Panc1 (cell line): ENCODE measurements at regions of chr5 and their contacts with region 1.

Region 1: DNA sequence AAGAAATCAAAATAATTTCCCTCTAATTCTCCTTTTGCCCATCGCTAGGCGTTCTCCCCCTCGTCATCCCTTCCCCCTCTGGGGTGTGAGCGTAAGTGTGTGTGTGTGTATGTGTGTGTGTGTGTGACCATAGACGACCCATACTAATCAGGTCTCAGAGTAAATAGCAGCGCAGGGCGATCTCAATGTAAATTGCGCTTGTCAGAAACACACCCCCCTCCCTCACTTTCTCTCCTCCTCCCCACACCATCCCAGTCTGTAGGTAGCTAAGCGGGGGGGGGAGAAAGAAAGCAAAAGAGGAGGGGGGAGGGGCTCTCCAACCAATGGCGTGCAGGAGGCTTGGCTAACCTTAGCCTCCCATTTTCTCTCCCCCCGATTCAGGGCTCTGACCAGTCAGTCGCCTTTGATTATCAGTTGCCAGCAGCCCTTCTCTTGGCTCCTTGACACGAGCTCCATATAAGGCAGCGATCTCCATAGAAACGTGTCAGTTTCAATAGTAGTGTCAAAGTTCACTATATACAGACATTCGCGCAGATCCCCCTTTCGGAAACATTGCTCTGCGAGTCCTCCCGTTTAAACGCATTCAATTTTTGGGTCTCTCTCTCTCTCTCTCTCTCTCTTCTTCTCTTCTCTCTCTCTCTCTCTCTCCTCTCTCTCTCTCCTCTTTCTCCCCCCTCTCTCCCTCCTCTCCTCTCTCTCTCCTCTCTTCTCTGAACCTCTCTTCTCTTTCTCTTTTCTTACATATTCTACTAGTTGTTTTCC is at the start of gene NR2F1:
- DNase-seq: no peak
- ATAC-seq: peak; percentile 56
- H3K4me3 ChIP-seq: peak within 1 kb of the TSS; percentile 68 to 71
- H3K27ac ChIP-seq: peak within 1 kb of the TSS; percentile 94
- H3K4me1 ChIP-seq: peaks cover 16% of the 10 kb centered on the region
- H3K27me3 ChIP-seq: no peaks in the 10 kb centered on the region
- CTCF ChIP-seq: no peak
- total RNA-seq, gene NR2F1: 49.5 TPM

Region 2: DNA sequence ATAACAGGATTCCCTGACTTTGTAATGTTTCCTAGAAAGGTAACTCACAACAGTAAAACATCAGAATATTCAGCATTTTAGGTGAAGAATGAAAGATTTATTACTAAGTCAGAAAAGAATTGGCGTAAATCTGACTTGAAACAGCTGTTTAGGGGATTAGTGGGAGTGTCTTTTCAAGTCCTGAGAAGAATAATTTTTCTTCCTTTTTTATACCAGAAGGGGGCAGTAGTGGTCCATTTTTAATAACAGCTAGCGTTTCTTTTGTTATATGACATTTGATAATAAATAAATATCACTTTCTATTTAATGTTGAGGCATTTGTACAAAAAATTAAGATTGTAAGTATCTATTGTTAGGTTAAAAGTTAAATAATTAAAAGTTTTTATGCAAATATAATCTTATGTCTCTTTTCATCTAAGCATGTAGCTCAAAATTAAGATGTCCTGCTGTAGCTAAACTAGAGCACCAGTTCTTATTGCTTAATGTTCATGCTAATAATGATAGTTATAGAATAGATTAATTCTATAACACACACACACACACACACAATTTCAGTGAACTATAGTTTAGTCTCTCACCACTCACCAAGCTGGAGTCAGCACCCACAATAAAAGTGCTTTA is 1941.0 kb before region 1 on chr5:
- CTCF ChIA-PET with region 1: no interaction called
- POLR2A ChIA-PET with region 1: no interaction called
- in situ Hi-C with region 1: no loop called
- intact Hi-C with region 1: loop called (anchors 10 kb)
- DNase-seq: peak; percentile 15
- ATAC-seq: no peak
- H3K4me3 ChIP-seq: no peak overlapping the region
- H3K27ac ChIP-seq: peak overlapping the region; percentile 72; the same call in 1 of the 2 replicates
- H3K4me1 ChIP-seq: peaks cover 11% of the 10 kb centered on the region
- H3K27me3 ChIP-seq: no peaks in the 10 kb centered on the region
- CTCF ChIP-seq: peak; percentile 63; the same call in 1 of the 2 replicates

Region 3: GRCh38 chr5:92884469-92884868 is 698.4 kb before region 1 on chr5:
- CTCF ChIA-PET with region 1: no interaction called
- POLR2A ChIA-PET with region 1: interaction called, 10 read pairs
- in situ Hi-C with region 1: no loop called
- intact Hi-C with region 1: no loop called
- DNase-seq: no peak
- ATAC-seq: no peak
- H3K4me3 ChIP-seq: no peak overlapping the region
- H3K27ac ChIP-seq: no peak overlapping the region; the same call in 1 of the 2 replicates
- H3K4me1 ChIP-seq: no peaks in the 10 kb centered on the region
- H3K27me3 ChIP-seq: no peaks in the 10 kb centered on the region
- CTCF ChIP-seq: no peak; the same call in 1 of the 2 replicates

Region 4: GRCh38 chr5:93249651-93250289 is 333.1 kb before region 1 on chr5:
- CTCF ChIA-PET with region 1: no interaction called
- POLR2A ChIA-PET with region 1: interaction called, 3 read pairs
- in situ Hi-C with region 1: no loop called
- intact Hi-C with region 1: loop called (anchors 5 kb)
- DNase-seq: no peak
- ATAC-seq: peak; percentile 85
- H3K4me3 ChIP-seq: peak overlapping the region; percentile 33 to 58
- H3K27ac ChIP-seq: peak overlapping the region; percentile 93
- H3K4me1 ChIP-seq: peaks cover 51% of the 10 kb centered on the region
- H3K27me3 ChIP-seq: no peaks in the 10 kb centered on the region
- CTCF ChIP-seq: no peak

Region 5: GRCh38 chr5:93461756-93462155 is 121.1 kb before region 1 on chr5:
- CTCF ChIA-PET with region 1: no interaction called
- POLR2A ChIA-PET with region 1: no interaction called
- in situ Hi-C with region 1: no loop called
- intact Hi-C with region 1: no loop called
- DNase-seq: no peak
- ATAC-seq: no peak
- H3K4me3 ChIP-seq: no peak overlapping the region
- H3K27ac ChIP-seq: no peak overlapping the region
- H3K4me1 ChIP-seq: no peaks in the 10 kb centered on the region
- H3K27me3 ChIP-seq: no peaks in the 10 kb centered on the region
- CTCF ChIP-seq: no peak

Region 6: DNA sequence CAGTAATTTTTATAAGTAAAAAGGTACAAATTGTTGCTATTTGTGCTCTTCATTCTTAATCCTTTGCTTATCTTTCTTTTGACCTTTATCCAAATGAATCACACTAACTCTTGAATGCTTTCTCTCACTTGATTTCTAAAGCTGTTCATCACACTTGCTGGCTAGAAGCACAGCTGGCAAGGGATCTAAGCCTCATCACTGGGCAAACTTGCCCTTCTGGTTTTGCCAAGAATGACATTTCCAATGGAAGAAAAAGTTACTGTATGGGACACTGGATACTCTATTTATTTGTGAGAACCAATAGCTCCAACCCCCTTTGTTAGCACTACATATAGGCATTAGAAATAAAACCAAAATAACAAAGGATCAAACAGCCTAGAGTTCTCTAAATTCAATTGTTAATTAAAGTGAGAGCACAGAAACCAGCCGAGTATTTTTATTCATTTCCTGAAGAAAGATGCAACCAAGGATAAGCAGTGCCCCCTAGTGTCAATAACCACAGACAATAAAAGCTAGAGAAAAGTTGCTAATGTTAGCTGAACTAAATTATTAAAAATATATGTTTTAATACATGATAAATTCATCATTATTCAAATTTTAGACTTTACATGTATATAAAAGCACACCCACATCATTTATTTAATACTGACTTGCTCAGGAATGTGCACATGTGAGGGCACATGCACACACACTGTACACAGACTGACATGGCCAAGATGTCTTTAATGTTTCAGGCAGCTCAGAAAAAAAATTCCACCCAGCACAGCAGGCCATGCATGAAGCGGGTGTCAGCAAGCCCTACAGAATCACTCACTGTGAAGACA is 218.3 kb after region 1 on chr5:
- CTCF ChIA-PET with region 1: interaction called, 4 read pairs
- POLR2A ChIA-PET with region 1: interaction called, 8 read pairs
- in situ Hi-C with region 1: no loop called
- intact Hi-C with region 1: loop called (anchors 2 kb)
- DNase-seq: peak; percentile 24
- ATAC-seq: peak; percentile 73
- H3K4me3 ChIP-seq: no peak overlapping the region
- H3K27ac ChIP-seq: peak overlapping the region; percentile 63; the same call in 1 of the 2 replicates
- H3K4me1 ChIP-seq: peaks cover 9% of the 10 kb centered on the region
- H3K27me3 ChIP-seq: no peaks in the 10 kb centered on the region
- CTCF ChIP-seq: peak; percentile 76